HCT116 (cell line): ENCODE measurements at regions of chrX and their contacts with region 1.

Region 1: DNA sequence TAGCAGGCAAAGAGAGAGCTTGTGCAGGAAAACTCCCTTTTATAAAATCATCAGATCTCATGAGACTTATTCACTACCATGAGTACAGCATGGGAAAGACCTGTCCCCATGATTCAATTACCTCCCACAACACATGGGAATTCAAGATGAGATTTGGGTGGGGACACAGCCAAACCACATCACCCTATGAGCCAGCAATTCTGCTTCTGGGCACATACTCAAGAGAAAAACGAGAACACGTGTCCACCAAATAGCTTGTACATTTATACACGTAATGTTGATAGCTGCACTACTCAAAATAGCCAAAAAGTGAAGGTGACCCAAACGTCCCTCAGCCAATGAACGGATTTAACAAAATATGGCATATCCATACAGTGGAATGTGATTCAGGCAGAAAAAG is 94.5 kb upstream of the DHRSX start:
- DNase-seq: no peak
- ATAC-seq: no peak
- H3K4me3 ChIP-seq: no peak overlapping the region
- H3K27ac ChIP-seq: no peak overlapping the region
- H3K4me1 ChIP-seq: peaks cover 10 to 36% of the 10 kb centered on the region in 2 experiments; a peak in 3 of 4 replicates
- H3K27me3 ChIP-seq: no peaks in the 10 kb centered on the region
- CTCF ChIP-seq: no peak
- POLR2A ChIP-seq: no peak
- RAD21 ChIP-seq: no peak

Region 2: DNA sequence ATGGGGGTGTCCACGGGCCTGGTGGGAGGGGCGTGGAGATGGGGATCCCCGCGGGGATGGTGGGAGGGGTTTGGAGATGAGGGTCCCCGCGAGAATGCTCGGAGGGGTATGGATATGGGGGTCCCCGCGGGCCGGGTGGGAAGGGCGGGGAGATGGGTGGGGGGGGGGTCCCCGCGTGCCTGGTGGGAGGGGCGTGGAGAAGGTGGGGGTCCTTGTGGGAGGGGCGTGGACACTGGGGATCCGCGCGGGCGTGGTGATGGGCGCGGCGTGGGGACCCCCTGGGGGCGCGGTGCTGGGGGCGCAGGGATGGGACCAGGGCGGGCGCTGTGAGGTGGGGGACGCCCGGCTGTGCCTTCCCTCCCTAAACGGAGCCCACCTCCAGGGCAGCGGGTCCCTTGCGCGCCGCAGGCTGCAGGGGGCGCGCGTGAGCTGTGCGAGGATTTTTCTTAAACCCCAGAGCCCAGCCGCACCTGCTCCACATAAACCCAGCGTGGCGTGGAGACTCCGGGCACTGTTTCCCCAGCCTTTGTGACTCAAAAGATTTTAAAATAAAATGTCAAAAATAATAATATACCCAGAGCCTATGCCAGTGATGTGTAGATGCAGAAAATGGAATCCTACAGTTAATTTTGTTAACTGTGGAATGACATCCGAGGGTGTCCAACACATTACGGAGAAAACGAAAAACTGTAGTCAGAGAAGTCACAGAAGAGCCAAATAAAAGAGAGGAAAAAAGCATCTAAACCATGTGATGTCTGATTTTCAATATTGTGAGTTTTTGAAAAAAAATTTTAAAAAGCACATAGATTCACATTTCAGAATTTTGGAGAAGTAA is 1141.1 kb before region 1 on chrX:
- CTCF ChIA-PET with region 1: no interaction called
- POLR2A ChIA-PET with region 1: no interaction called
- RAD21 ChIA-PET with region 1: no interaction called
- intact Hi-C with region 1: loop called (anchors 10 kb)
- DNase-seq: peak; percentile 36
- ATAC-seq: peak; percentile 41
- H3K4me3 ChIP-seq: no peak overlapping the region
- H3K27ac ChIP-seq: no peak overlapping the region
- H3K4me1 ChIP-seq: peaks cover 0 to 8% of the 10 kb centered on the region in 2 experiments; a peak in 1 of 4 replicates
- H3K27me3 ChIP-seq: 0 out of 2 replicates have a peak, but pooled peaks cover 2% of the 10 kb centered on the region
- CTCF ChIP-seq: peak in 2 of 3 experiments; percentile 71 to 86; a peak in 4 of 6 replicates
- POLR2A ChIP-seq: no peak
- RAD21 ChIP-seq: no peak

Region 3: GRCh38 chrX:1657367-1658070 is 937.7 kb before region 1 on chrX:
- CTCF ChIA-PET with region 1: no interaction called
- POLR2A ChIA-PET with region 1: no interaction called
- RAD21 ChIA-PET with region 1: no interaction called
- intact Hi-C with region 1: loop called (anchors 1 kb)
- DNase-seq: no peak
- ATAC-seq: no peak
- H3K4me3 ChIP-seq: no peak overlapping the region
- H3K27ac ChIP-seq: no peak overlapping the region
- H3K4me1 ChIP-seq: no peaks in the 10 kb centered on the region
- H3K27me3 ChIP-seq: no peaks in the 10 kb centered on the region
- CTCF ChIP-seq: no peak
- POLR2A ChIP-seq: no peak
- RAD21 ChIP-seq: no peak; the same call in 1 of the 2 replicates

Region 4: GRCh38 chrX:1894740-1895139 is 700.5 kb before region 1 on chrX:
- CTCF ChIA-PET with region 1: no interaction called
- POLR2A ChIA-PET with region 1: no interaction called
- RAD21 ChIA-PET with region 1: no interaction called
- intact Hi-C with region 1: loop called (anchors 10 kb)
- DNase-seq: no peak
- ATAC-seq: no peak
- H3K4me3 ChIP-seq: no peak overlapping the region
- H3K27ac ChIP-seq: no peak overlapping the region
- H3K4me1 ChIP-seq: no peaks in the 10 kb centered on the region
- H3K27me3 ChIP-seq: no peaks in the 10 kb centered on the region
- CTCF ChIP-seq: no peak
- POLR2A ChIP-seq: no peak
- RAD21 ChIP-seq: no peak

Region 5: DNA sequence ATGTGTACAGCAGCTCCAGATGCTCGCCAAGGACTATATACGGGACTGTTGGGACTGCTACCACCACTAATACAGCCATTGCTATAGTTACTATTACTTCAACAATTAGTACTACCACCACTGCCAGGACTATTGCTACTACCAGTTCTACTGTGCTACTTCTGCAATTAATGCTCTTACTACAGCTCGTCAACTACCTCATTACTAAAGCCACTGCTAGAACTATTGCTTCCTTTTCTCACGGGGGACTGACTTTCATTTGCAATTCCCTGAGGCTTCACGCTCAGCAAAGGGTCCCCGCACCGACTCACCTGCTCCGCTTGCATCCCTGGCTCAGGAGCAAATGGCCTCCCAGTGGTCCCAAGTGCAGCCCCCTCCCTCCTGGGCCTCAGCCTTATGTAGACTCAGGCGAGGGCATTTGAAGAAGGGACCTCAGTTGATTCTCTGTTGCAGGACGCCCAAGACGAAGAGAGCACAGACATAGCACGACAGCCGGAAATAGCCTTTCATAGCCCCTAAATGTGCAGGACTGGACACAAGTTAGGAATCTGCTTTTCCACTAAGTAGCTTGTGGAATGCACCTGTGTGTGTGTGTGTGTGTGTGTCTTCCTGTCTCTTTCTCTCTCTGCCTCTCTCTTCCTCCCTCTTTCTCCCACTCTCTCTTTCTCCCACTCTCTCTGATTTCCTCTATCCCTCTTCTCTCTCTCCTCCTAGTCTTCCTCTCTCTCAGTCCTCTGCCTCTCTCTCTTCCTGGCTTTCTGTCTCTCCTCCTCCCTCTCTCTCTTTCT is 685.6 kb before region 1 on chrX:
- CTCF ChIA-PET with region 1: no interaction called
- POLR2A ChIA-PET with region 1: no interaction called
- RAD21 ChIA-PET with region 1: no interaction called
- intact Hi-C with region 1: no loop called
- DNase-seq: no peak
- ATAC-seq: no peak
- H3K4me3 ChIP-seq: no peak overlapping the region
- H3K27ac ChIP-seq: no peak overlapping the region
- H3K4me1 ChIP-seq: no peaks in the 10 kb centered on the region
- H3K27me3 ChIP-seq: no peaks in the 10 kb centered on the region
- CTCF ChIP-seq: no peak
- POLR2A ChIP-seq: no peak
- RAD21 ChIP-seq: no peak

Region 6: DNA sequence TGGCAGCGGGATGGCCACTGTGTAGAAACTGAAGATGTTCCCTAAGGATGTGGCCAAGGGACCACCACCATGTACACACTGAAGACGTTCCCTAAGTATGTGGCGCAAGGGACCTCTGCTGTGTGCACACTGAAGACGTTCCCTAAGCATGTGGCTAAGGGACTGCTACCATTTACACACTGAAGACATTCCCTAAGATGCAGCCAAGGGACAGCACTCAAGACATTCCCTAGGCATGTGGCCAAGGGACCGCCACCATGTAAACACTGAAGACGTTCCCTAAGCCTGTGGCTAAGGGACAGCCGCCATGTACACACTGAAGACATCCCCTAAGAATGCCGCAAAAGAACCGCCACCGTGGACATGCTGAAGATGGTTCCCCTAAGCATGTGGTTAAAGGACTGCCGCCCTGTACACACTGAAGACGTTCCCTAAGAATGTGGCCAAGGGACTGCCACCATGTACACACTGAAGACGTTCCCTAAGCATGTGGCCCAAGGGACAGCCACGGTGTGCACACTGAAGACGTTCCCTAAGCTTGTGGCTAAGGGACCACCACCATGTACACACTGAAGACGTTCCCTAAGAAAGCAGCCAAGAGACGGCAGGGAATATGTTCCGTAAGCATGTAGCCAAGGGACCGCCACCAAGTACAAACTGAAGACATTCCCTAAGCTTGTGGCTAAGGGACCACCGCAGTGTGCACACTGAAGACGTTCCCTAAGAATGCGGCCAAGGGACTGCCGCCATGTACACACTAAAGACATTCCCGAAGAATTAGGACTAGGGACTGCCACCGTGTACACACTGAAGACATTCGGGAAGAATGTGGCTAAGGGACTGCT is 137.7 kb before region 1 on chrX:
- CTCF ChIA-PET with region 1: no interaction called
- POLR2A ChIA-PET with region 1: no interaction called
- RAD21 ChIA-PET with region 1: no interaction called
- intact Hi-C with region 1: loop called (anchors 2 kb)
- DNase-seq: peak; percentile 98
- ATAC-seq: peak; percentile 67
- H3K4me3 ChIP-seq: peak overlapping the region; percentile 24 to 47
- H3K27ac ChIP-seq: peak overlapping the region; percentile 93
- H3K4me1 ChIP-seq: peaks cover 12 to 44% of the 10 kb centered on the region in 2 experiments
- H3K27me3 ChIP-seq: no peaks in the 10 kb centered on the region
- CTCF ChIP-seq: no peak
- POLR2A ChIP-seq: no peak
- RAD21 ChIP-seq: no peak

Region 7: GRCh38 chrX:2463973-2464676 is 131.1 kb before region 1 on chrX:
- CTCF ChIA-PET with region 1: no interaction called
- POLR2A ChIA-PET with region 1: no interaction called
- RAD21 ChIA-PET with region 1: no interaction called
- intact Hi-C with region 1: loop called (anchors 2 kb)
- DNase-seq: peak; percentile 99
- ATAC-seq: peak; percentile 71
- H3K4me3 ChIP-seq: peak overlapping the region; percentile 47 to 57
- H3K27ac ChIP-seq: peak overlapping the region; percentile 92
- H3K4me1 ChIP-seq: peaks cover 10 to 51% of the 10 kb centered on the region in 2 experiments; a peak in 3 of 4 replicates
- H3K27me3 ChIP-seq: no peaks in the 10 kb centered on the region
- CTCF ChIP-seq: no peak
- POLR2A ChIP-seq: no peak
- RAD21 ChIP-seq: no peak

Region 8: GRCh38 chrX:2677764-2678163 is 82.5 kb after region 1 on chrX:
- CTCF ChIA-PET with region 1: no interaction called
- POLR2A ChIA-PET with region 1: no interaction called
- RAD21 ChIA-PET with region 1: no interaction called
- intact Hi-C with region 1: no loop called
- DNase-seq: peak; percentile 40
- ATAC-seq: peak; percentile 95
- H3K4me3 ChIP-seq: peak overlapping the region in 1 of 2 experiments; percentile 7; a peak in 1 of 4 replicates
- H3K27ac ChIP-seq: no peak overlapping the region
- H3K4me1 ChIP-seq: peaks cover 0 to 17% of the 10 kb centered on the region in 2 experiments; a peak in 2 of 4 replicates
- H3K27me3 ChIP-seq: no peaks in the 10 kb centered on the region
- CTCF ChIP-seq: no peak
- POLR2A ChIP-seq: no peak
- RAD21 ChIP-seq: 0 out of 2 replicates have a peak, but pooled peaks have one; percentile 14